HEK293 (cell line): ENCODE measurements at regions of chr19 and their contacts with region 1.

Region 1: GRCh38 chr19:35306473-35307246 is 14.7 kb downstream of the MAG start:
- H3K4me3 ChIP-seq: no peak overlapping the region
- H3K27ac ChIP-seq: no peak overlapping the region
- H3K4me1 ChIP-seq: no peaks in the 10 kb centered on the region
- CTCF ChIP-seq: peak; percentile 80

Region 2: GRCh38 chr19:35253316-35254286 is 53.1 kb before region 1 on chr19:
- CTCF ChIA-PET with region 1: no interaction called
- POLR2A ChIA-PET with region 1: no interaction called
- H3K4me3 ChIP-seq: no peak overlapping the region
- H3K27ac ChIP-seq: no peak overlapping the region
- H3K4me1 ChIP-seq: peaks cover 6% of the 10 kb centered on the region
- CTCF ChIP-seq: no peak

Region 3: DNA sequence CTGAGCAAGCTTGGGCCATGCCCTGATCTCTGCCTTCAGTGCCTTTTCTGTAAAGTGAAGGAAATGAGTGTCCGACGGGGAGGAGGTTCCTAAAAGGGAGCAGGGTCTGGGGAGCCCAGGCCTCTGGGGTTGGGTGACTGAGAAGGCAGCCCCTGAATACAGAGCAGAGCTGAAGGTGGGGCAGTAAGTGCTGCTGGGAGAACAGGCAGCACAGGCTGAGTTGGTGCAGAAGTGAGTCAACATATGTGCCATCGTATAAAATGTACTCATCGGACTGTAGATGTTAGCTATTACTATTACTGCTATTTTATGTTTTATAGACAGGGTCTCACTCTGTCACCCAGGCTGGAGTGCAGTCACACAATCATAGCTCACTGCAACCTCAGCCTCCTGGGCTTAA is 25.4 kb before region 1 on chr19:
- CTCF ChIA-PET with region 1: no interaction called
- POLR2A ChIA-PET with region 1: no interaction called
- H3K4me3 ChIP-seq: no peak overlapping the region
- H3K27ac ChIP-seq: no peak overlapping the region
- H3K4me1 ChIP-seq: no peaks in the 10 kb centered on the region
- CTCF ChIP-seq: no peak

Region 4: DNA sequence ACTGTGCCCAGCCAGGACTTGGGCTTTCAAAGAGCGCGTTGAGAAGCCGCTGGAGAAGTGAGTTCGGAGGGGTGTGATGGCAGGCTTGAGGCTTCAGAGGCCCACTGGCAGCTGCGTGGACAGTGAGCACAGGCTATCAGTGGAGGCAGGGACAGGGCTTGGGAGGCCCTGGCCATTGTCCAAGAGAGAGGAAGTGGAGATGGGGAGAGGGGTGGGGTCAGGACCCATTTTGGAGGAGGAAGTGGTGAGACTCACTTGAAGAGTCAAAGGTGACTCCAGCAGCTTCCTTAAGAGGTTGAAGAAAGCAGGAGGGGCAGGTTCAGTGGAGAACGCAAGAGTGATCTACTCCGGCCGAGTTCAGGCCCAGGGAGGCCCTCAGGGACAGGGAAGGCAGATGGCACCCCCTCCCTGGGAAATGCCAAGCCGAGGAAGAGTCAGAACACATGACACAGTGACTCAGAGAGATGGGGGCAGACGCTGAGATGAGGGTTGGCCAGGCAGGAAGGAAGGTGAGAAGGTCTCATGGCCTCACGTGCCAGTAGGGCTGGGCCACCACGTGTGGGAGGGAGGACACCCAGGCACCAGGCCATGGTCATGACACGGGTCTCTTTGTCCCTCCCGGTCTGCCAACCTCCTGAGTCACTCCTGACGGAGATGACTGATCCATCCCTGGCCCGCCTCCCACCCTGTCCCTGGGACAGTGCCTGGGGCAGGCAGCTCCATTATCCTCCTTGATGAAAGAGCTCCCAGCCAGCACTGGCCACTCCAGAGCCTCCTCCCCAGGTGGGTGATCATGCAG is 12.2 kb after region 1 on chr19:
- CTCF ChIA-PET with region 1: interaction called, 11 read pairs
- POLR2A ChIA-PET with region 1: no interaction called
- H3K4me3 ChIP-seq: no peak overlapping the region
- H3K27ac ChIP-seq: no peak overlapping the region
- H3K4me1 ChIP-seq: no peaks in the 10 kb centered on the region
- CTCF ChIP-seq: no peak

Region 5: GRCh38 chr19:35360880-35361420 is 54.3 kb after region 1 on chr19:
- CTCF ChIA-PET with region 1: no interaction called
- POLR2A ChIA-PET with region 1: no interaction called
- H3K4me3 ChIP-seq: no peak overlapping the region
- H3K27ac ChIP-seq: no peak overlapping the region
- H3K4me1 ChIP-seq: no peaks in the 10 kb centered on the region
- CTCF ChIP-seq: no peak

Region 6: GRCh38 chr19:35389192-35389861 is 82.7 kb after region 1 on chr19:
- CTCF ChIA-PET with region 1: no interaction called
- POLR2A ChIA-PET with region 1: no interaction called
- H3K4me3 ChIP-seq: no peak overlapping the region
- H3K27ac ChIP-seq: no peak overlapping the region
- H3K4me1 ChIP-seq: no peaks in the 10 kb centered on the region
- CTCF ChIP-seq: no peak